Naive thymus-derived CD4-positive, alpha-beta T cell (primary cell): ENCODE measurements at regions of chr1 and their contacts with region 1.

Region 1: GRCh38 chr1:160284782-160285344 is at the start of gene PEX19:
- DNase-seq: peak; percentile 85 to 95 (median 92)
- ATAC-seq: peak; percentile 100
- H3K4me3 ChIP-seq: peak within 1 kb of the TSS; percentile 95
- H3K4me3 Mint-ChIP-seq: peak within 1 kb of the TSS; percentile 95 to 100 (median 98)
- H3K27ac ChIP-seq: peak within 1 kb of the TSS; percentile 89
- H3K27ac Mint-ChIP-seq: peak within 1 kb of the TSS; percentile 93 to 99 (median 94)
- H3K4me1 ChIP-seq: peaks cover 11 to 16% of the 10 kb centered on the region in 2 donors
- H3K4me1 Mint-ChIP-seq: peaks cover 16 to 41% (median 31%) of the 10 kb centered on the region in 7 donors
- H3K27me3 ChIP-seq: no peaks in the 10 kb centered on the region
- H3K27me3 Mint-ChIP-seq: no peaks in the 10 kb centered on the region
- total RNA-seq, gene PEX19: 37.9 to 66.1 (median 49.2) TPM

Region 2: GRCh38 chr1:160169553-160170399 is 115.1 kb before region 1 on chr1:
- CTCF ChIA-PET with region 1: no interaction called
- POLR2A ChIA-PET with region 1: no interaction called
- intact Hi-C with region 1: no loop called
- DNase-seq: no peak
- ATAC-seq: peak; percentile 34
- H3K4me3 ChIP-seq: no peak overlapping the region
- H3K4me3 Mint-ChIP-seq: no peak overlapping the region
- H3K27ac ChIP-seq: no peak overlapping the region
- H3K27ac Mint-ChIP-seq: peak overlapping the region in 1 of 9 donors; percentile 9
- H3K4me1 ChIP-seq: no peaks in the 10 kb centered on the region
- H3K4me1 Mint-ChIP-seq: peaks cover 6 to 12% (median 9%) of the 10 kb centered on the region in 7 donors
- H3K27me3 ChIP-seq: no peaks in the 10 kb centered on the region
- H3K27me3 Mint-ChIP-seq: peaks cover 10 to 37% (median 13%) of the 10 kb centered on the region in 5 donors

Region 3: GRCh38 chr1:160205242-160206035 is 79.4 kb before region 1 on chr1 and contains the start of gene PEA15:
- CTCF ChIA-PET with region 1: no interaction called
- POLR2A ChIA-PET with region 1: interaction called, 7 read pairs
- intact Hi-C with region 1: loop called in 1 of 2 experiments (anchors 5 kb)
- DNase-seq: peak; percentile 43 to 81 (median 49)
- ATAC-seq: peak; percentile 81
- H3K4me3 ChIP-seq: peak within 1 kb of the TSS; percentile 77
- H3K4me3 Mint-ChIP-seq: peak within 1 kb of the TSS; percentile 78 to 94 (median 88)
- H3K27ac ChIP-seq: peak within 1 kb of the TSS; percentile 74
- H3K27ac Mint-ChIP-seq: peak within 1 kb of the TSS; percentile 75 to 92 (median 88)
- H3K4me1 ChIP-seq: peaks cover 12 to 16% of the 10 kb centered on the region in 2 donors
- H3K4me1 Mint-ChIP-seq: peaks cover 31 to 49% (median 37%) of the 10 kb centered on the region in 7 donors
- H3K27me3 ChIP-seq: no peaks in the 10 kb centered on the region
- H3K27me3 Mint-ChIP-seq: no peaks in the 10 kb centered on the region
- total RNA-seq, gene PEA15: 11.5 to 38.6 (median 13.4) TPM